BJ (cell line): ENCODE measurements at regions of chr6 and their contacts with region 1.

Region 1: DNA sequence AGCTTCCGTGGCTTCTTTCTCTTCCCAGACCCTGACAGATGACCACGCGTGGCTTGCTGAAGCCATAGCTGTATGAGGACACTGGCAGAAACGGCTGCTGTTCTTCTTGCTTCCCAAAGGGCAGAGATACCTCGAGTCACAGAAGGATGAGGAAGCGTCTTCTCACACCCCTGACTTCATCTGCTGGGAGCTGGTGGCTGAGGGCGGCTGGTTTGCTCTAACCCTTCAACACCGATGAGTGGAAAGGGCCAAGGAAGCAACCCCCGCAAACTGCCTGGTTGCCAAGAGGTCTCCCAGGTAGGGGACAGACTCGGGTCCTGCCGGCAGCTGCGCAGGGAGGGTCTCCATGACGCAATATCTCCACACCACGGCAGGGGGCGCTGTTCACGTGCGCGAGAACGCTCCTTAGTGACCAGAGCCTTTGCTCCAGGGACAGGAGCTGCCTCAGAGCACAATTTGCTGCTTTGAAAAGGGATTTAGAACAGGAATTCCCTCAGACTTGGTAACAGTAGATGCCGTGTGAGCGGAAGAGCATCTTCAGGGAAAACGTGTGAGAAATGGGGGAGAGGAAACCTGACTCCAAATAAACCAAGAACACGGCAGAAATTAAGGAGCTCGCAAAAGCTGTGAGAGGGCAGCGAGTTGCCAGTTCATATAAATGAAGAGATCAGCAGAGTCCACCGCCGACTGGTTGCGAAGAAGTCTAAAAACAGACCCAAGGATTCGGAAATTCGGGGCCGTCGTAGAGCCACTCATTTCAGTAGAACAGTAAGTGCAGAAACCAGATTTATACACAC is 80.2 kb downstream of the ERMARD start:
- DNase-seq: no peak
- H3K4me3 ChIP-seq: no peak overlapping the region
- H3K27me3 ChIP-seq: no peaks in the 10 kb centered on the region
- CTCF ChIP-seq: peak; percentile 90

Region 2: GRCh38 chr6:169654598-169655391 is 176.9 kb before region 1 on chr6:
- CTCF ChIA-PET with region 1: no interaction called
- POLR2A ChIA-PET with region 1: no interaction called
- DNase-seq: peak; percentile 11
- H3K4me3 ChIP-seq: peak overlapping the region; percentile 40
- H3K27me3 ChIP-seq: no peaks in the 10 kb centered on the region
- CTCF ChIP-seq: peak; percentile 40

Region 3: GRCh38 chr6:169800668-169801395 is 30.8 kb before region 1 on chr6:
- CTCF ChIA-PET with region 1: interaction called, 14 read pairs
- POLR2A ChIA-PET with region 1: no interaction called
- DNase-seq: no peak
- H3K4me3 ChIP-seq: no peak overlapping the region
- H3K27me3 ChIP-seq: peaks cover 2% of the 10 kb centered on the region; the same call in 1 of the 2 replicates
- CTCF ChIP-seq: no peak

Region 4: DNA sequence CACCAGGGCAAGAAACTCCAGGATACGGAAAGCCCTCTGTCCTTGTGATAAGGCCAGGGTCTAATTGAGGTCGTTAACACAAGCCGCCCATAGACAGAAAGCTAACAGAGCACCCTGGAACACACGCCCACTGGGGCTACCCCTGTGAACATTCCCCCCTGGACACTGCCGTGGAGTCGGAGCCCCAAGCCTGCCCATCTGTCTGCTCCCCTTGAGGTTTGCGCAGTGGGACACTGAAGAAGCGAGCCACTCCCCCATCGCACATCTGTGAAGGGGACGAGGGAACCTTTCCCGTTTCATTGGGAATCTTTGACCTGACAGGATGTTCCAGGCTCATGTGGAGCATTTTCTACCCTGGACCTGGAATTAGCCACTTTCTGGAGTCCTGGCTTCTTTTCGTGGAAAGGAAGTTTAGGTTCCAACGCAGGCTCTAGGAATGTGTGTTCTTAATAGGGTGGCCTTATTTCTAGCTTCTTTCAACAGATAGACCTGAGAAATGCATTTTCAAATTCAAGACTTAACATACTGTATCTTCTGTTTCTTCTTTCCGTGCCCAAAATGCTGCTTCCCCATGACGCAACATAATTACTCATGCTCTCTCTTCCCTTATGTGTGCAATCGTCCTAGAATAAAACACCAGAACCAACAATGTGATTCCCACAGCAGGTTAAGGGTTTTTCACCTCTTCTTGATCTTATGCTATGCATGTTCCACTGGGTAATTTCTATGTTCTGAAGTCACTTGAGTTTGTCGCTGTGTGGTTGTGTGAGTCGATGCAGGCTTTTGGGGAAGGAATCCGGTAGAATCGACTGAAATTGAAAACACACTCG is 80.8 kb after region 1 on chr6:
- CTCF ChIA-PET with region 1: no interaction called
- POLR2A ChIA-PET with region 1: no interaction called
- DNase-seq: no peak
- H3K4me3 ChIP-seq: no peak overlapping the region
- H3K27me3 ChIP-seq: no peaks in the 10 kb centered on the region
- CTCF ChIP-seq: no peak

Region 5: DNA sequence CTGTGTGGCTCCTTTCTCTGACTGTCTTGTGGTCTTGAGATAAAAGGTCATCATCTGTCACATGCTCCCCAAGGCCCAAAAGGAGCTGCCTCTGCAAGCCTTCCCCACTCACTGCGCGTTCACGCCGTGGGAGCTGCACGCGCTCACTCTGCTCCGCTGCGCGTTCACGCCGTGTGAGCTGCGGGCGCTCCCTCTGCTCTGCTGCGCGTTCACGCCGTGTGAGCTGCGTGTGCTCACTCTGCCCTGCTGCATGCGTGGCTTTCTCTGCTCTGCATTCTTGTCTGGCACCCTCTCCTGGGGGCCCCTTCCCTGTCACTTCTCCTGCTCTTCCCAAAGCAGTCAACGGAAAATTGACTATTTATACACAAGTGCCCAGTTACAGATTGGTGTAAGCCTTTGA is 679.0 kb after region 1 on chr6:
- CTCF ChIA-PET with region 1: interaction called, 63 read pairs
- POLR2A ChIA-PET with region 1: no interaction called
- DNase-seq: no peak
- H3K4me3 ChIP-seq: no peak overlapping the region
- H3K27me3 ChIP-seq: no peaks in the 10 kb centered on the region
- CTCF ChIP-seq: no peak

Region 6: GRCh38 chr6:170522565-170523183 is 691.0 kb after region 1 on chr6:
- CTCF ChIA-PET with region 1: interaction called, 70 read pairs
- POLR2A ChIA-PET with region 1: no interaction called
- DNase-seq: no peak
- H3K4me3 ChIP-seq: no peak overlapping the region
- H3K27me3 ChIP-seq: no peaks in the 10 kb centered on the region
- CTCF ChIP-seq: peak; percentile 42

Region 7: DNA sequence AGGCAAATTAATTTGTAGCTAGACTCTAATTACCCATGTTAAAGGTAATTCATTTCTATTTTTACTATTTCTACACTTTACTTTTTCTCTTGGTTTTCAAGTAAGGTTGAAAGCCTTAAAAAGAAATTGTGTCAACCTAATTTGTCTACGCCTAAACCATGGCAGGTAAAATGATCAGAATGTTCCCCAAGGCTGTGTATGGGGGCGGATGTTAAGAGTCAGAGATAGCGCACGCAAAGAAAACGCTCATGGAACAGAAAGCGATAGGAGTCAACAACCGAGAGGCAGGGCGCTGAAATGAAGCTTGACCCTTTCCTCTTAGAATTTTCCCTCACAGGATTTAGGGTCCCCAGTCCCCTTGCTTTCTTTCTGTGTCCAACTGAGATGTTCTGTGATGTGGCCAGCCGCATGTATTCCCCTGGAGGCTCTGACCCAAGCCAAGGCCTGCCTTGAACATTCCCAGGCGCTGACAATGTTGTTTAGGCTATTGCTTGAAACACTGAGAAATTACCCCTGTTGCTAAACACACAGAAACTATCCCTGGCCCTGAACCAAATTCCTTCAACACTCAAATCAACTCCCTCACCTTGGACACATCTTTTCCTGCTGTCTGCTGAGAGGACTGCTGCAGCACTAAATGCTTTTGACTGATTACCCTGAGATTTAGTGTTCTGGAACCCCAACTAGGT is 710.5 kb after region 1 on chr6:
- CTCF ChIA-PET with region 1: interaction called, 11 read pairs
- POLR2A ChIA-PET with region 1: no interaction called
- DNase-seq: no peak
- H3K4me3 ChIP-seq: no peak overlapping the region
- H3K27me3 ChIP-seq: no peaks in the 10 kb centered on the region
- CTCF ChIP-seq: no peak